ENCODE measurements at regions of chr19 and their contacts with region 1.

Region 1: GRCh38 chr19:13861732-13862531 is 15.0 kb upstream of the NANOS3 start:
- DNase-seq: peak; percentile 94
- H3K4me3 ChIP-seq: peak overlapping the region; percentile 39
- H3K27ac ChIP-seq: peak overlapping the region; percentile 87
- H3K4me1 ChIP-seq: no peaks in the 10 kb centered on the region
- H3K27me3 ChIP-seq: no peaks in the 10 kb centered on the region
- CTCF ChIP-seq: peak; percentile 99

Region 2: DNA sequence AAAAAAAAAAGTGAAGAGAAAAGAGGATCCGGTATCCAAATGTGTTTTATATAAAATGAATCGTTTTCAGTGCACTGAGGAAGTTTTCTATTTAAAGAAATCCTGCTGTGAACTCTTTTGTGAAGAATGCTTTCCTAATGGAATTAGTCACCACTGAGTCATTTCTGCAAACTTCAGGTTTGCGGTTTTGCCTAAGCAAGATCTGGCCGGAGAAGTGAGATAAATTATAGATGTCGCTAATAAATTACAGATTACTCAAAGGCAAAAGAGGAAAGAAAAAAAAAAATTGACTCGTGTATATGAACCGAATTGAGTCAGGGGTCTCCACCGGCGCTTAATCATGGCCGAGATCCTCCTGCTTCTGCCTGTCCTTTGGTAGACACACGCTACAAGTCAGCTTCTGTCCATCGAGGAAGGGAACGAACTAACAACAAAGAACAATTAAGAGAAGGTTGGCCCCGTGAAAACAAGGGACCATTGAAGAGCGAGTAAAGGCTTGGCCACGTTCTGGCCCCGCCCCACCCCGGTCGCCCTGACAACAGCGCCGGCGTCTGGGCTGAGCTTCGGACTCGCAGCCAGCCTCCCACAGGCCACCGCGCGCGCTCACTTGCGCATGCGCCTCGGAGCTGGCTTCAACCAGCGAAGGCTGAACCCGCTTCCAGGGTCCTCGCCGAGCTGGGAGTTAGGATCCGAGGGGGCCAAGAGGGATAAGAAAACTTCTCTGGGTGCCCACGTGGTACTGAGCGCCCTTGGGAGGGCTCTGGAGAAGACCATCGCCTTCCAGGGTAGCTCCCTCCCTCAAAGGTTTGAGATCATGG is 130.6 kb before region 1 on chr19:
- intact Hi-C with region 1: no loop called
- DNase-seq: peak; percentile 98
- H3K4me3 ChIP-seq: peak overlapping the region; percentile 52
- H3K27ac ChIP-seq: peak overlapping the region; percentile 89
- H3K4me1 ChIP-seq: no peaks in the 10 kb centered on the region
- H3K27me3 ChIP-seq: no peaks in the 10 kb centered on the region
- CTCF ChIP-seq: no peak

Region 3: GRCh38 chr19:13784731-13785452 is 77.0 kb before region 1 on chr19:
- intact Hi-C with region 1: loop called (anchors 2 kb)
- DNase-seq: peak; percentile 78
- H3K4me3 ChIP-seq: no peak overlapping the region
- H3K27ac ChIP-seq: no peak overlapping the region
- H3K4me1 ChIP-seq: no peaks in the 10 kb centered on the region
- H3K27me3 ChIP-seq: no peaks in the 10 kb centered on the region
- CTCF ChIP-seq: peak; percentile 68